ENCODE measurements at regions of chr9 and their contacts with region 1.

Region 1: GRCh38 chr9:38068866-38069629 is at the start of gene SHB:
- DNase-seq: peak; percentile 86
- ATAC-seq: peak; percentile 80
- H3K4me3 Mint-ChIP-seq: peak within 1 kb of the TSS; percentile 56
- H3K27ac Mint-ChIP-seq: no peak within 1 kb of the TSS
- H3K4me1 Mint-ChIP-seq: peaks cover 15% of the 10 kb centered on the region
- H3K27me3 Mint-ChIP-seq: peaks cover 7% of the 10 kb centered on the region
- total RNA-seq, gene SHB: 1.2 to 1.3 TPM

Region 2: DNA sequence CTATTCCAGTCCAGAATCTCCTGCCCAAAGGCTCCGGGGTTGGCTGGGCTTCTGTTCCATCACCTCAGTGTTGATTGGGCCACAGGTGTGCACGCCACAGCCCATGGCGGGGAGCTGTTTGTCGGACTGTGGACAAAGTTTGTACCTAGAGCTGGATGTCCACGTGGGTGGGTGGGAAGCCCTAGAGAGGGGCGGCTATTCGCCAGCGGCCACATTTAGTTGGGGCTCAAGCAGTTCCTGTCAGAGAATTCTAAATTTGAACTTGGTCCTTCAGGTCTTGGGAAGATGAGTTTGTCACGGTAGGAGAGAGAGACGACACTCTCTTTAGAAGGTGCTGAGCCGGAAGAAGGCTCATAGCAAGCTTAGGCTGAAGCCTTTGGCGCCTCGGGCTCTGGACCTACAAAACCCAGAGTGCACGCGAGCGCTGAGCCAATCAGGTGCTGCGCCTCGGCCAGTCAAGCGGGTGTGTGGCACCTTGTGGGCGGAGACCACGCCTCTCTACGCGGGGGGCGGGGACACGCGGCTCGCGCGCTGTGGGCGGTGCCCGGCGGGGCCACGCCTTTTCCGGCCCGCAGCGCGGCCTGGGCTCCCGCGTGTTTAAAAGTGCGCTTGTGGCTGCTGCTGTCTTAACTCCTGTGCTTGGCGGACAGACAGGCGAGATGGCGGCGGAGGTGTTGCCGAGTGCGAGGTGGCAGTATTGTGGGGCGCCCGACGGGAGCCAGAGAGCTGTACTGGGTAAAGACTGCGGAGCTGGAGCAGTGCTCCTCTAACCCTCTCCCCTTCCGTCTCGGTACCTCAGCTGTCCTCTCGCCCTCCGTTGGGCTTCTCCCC is 583.4 kb before region 1 on chr9 and contains the start of gene POLR1E:
- CTCF ChIA-PET with region 1: no interaction called
- POLR2A ChIA-PET with region 1: no interaction called
- intact Hi-C with region 1: loop called in 1 of 2 experiments (anchors 5 kb)
- DNase-seq: peak; percentile 98
- ATAC-seq: peak; percentile 97
- H3K4me3 Mint-ChIP-seq: peak within 1 kb of the TSS; percentile 94
- H3K27ac Mint-ChIP-seq: peak within 1 kb of the TSS; percentile 93
- H3K4me1 Mint-ChIP-seq: peaks cover 41% of the 10 kb centered on the region
- H3K27me3 Mint-ChIP-seq: peaks cover 7% of the 10 kb centered on the region
- total RNA-seq, gene POLR1E: 67.5 to 69.2 TPM

Region 3: DNA sequence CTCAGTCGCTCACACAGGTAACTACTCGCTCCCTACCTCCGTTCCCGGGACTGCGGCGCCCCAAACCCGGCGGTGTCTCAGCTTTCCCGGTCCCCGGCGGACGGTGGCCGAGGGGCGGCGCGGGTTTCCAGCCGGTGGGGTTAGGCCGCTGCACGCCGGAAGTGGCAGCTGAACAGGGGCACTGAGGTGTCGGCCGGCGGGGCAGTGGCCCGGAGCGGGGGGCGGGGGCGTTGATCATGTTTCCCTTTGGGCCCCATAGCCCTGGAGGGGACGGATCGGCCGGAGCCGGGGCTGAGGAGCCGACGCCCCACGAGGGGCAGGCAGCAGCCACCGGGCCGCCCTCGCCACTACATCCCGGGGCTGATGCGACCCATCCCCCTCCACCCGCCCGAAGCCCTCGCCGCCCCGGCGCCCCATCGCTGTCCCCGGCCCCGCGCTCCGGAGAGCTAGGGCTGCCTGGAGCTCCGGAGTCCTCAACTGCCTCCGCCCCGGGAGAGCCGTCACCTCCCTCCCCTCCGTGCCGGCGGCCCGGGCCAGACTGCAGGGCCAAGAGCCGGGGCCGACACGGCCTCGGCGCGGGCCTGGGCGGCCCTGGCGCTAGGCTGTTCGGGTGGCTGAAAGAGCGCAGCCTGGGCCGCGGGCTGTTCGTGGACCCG is 268.3 kb before region 1 on chr9 and contains the start of gene DCAF10:
- CTCF ChIA-PET with region 1: no interaction called
- POLR2A ChIA-PET with region 1: no interaction called
- intact Hi-C with region 1: loop called in 1 of 2 experiments (anchors 5 kb)
- DNase-seq: peak; percentile 92
- ATAC-seq: peak; percentile 78
- H3K4me3 Mint-ChIP-seq: peak within 1 kb of the TSS; percentile 90
- H3K27ac Mint-ChIP-seq: peak within 1 kb of the TSS; percentile 89
- H3K4me1 Mint-ChIP-seq: peaks cover 35% of the 10 kb centered on the region
- H3K27me3 Mint-ChIP-seq: no peaks in the 10 kb centered on the region
- total RNA-seq, gene DCAF10: 13.9 to 15.4 TPM

Region 4: DNA sequence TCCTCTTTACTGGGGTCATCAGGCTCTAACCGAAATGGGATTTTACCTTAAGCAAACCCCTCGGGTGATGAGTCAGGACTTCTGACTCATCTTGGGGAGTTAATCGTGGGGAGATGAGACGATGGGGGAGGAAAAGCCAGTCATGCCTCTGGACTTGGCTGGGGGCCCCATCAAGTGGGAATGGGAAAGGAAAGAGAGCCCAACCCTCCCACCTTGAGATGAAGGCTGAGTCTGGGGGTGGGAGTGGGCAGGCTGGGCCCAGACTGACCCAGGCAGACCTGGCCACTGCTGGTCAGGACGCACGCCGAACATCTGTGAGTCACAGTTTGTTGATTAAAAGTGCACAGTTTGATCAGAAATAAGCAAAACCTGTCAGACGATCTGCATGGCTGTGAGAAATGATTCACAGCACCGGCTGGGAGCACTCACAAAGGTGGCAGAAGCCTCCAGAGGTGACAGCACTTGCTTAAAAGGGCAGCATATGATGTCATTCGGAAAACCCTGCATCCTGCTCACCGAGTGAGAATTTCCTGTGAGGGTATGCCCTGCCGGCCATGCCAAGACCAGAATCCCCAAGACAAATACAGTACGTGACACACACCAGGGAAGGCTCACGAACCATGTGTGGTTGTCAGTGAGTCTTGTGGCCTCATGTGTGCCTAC is 115.1 kb before region 1 on chr9:
- CTCF ChIA-PET with region 1: no interaction called
- POLR2A ChIA-PET with region 1: no interaction called
- intact Hi-C with region 1: loop called in 1 of 2 experiments (anchors 1 kb)
- DNase-seq: peak; percentile 76
- ATAC-seq: peak; percentile 84
- H3K4me3 Mint-ChIP-seq: peak overlapping the region; percentile 1
- H3K27ac Mint-ChIP-seq: peak overlapping the region; percentile 70
- H3K4me1 Mint-ChIP-seq: peaks cover 31% of the 10 kb centered on the region
- H3K27me3 Mint-ChIP-seq: no peaks in the 10 kb centered on the region

Region 5: GRCh38 chr9:38088006-38088925 is 19.2 kb after region 1 on chr9:
- CTCF ChIA-PET with region 1: interaction called, 11 read pairs
- POLR2A ChIA-PET with region 1: no interaction called
- intact Hi-C with region 1: no loop called
- DNase-seq: peak; percentile 82
- ATAC-seq: peak; percentile 65
- H3K4me3 Mint-ChIP-seq: no peak overlapping the region
- H3K27ac Mint-ChIP-seq: no peak overlapping the region
- H3K4me1 Mint-ChIP-seq: no peaks in the 10 kb centered on the region
- H3K27me3 Mint-ChIP-seq: no peaks in the 10 kb centered on the region

Region 6: DNA sequence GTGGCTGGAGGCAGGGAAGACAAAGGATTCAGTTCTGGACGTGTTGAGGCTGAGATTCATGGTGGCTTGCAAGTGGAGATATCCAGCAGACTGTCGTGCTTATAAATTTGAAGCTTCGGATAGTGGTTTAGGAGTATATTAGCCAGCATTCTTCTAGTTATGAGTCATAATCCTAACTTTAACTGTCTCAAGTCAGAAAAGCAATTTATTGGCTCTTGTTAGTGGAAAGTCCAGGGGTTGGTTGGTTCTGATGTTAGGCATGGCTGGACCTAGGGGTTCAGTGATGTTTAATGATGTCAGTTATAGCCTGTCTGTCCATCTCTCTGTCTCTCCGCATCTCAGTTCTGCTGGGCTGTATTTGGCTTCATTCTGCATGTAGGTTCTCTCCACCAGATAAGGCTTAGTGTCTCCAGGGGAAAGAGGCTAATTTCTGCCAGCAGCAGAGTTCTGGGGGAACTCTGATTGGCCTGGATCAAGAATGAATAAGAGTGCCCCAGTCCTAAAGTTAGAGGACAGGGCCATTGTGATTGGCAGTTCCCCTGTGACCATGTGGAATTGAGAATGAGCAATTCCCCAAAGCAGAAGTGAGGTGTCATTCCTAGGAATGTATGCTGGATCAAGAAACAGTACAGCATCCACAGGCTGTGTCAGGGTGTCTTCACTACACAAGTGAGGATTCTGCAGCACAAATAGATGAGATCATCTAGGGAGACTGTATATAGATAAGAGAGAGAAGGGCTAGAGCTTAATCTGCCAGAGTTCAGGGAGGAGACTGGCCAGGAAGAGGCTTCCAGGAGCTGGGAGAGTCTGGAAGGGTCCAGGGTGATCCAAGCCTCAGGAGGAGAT is 72.9 kb after region 1 on chr9:
- CTCF ChIA-PET with region 1: no interaction called
- POLR2A ChIA-PET with region 1: no interaction called
- intact Hi-C with region 1: no loop called
- DNase-seq: no peak
- ATAC-seq: no peak
- H3K4me3 Mint-ChIP-seq: no peak overlapping the region
- H3K27ac Mint-ChIP-seq: no peak overlapping the region
- H3K4me1 Mint-ChIP-seq: no peaks in the 10 kb centered on the region
- H3K27me3 Mint-ChIP-seq: peaks cover 28% of the 10 kb centered on the region

Region 7: DNA sequence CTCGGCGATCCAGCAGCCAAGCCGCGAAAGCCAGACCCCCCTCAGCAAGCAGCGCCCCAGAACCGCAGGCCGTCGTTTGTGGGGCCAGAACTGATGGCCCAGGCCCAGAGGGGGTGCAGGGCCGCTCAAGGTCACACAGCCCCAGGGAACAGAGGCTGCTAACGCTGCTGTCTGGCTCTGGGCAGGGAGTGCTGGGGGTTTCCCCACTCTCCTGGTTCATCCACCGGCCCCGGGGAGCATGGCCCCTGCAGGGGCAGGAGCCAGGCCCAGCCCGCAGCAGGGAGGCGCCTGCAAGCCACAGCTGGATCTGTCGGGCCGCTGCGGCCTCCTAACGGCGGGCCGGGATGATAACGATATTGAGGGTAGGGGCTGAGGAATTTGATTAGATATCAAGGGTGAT is 420.0 kb after region 1 on chr9:
- CTCF ChIA-PET with region 1: no interaction called
- POLR2A ChIA-PET with region 1: no interaction called
- intact Hi-C with region 1: no loop called
- DNase-seq: no peak
- ATAC-seq: no peak
- H3K4me3 Mint-ChIP-seq: no peak overlapping the region
- H3K27ac Mint-ChIP-seq: no peak overlapping the region
- H3K4me1 Mint-ChIP-seq: no peaks in the 10 kb centered on the region
- H3K27me3 Mint-ChIP-seq: peaks cover 2% of the 10 kb centered on the region